ENCODE measurements at regions of chr1 and their contacts with region 1.

Region 1: GRCh38 chr1:75672528-75673393 is 51.7 kb upstream of the ACADM start:
- DNase-seq: peak; percentile 19 to 38
- H3K4me3 ChIP-seq: no peak overlapping the region
- H3K4me3 Mint-ChIP-seq: no peak overlapping the region
- H3K27ac Mint-ChIP-seq: peak overlapping the region; percentile 76
- H3K4me1 ChIP-seq: peaks cover 20% of the 10 kb centered on the region
- H3K4me1 Mint-ChIP-seq: peaks cover 7% of the 10 kb centered on the region
- H3K27me3 ChIP-seq: no peaks in the 10 kb centered on the region
- H3K27me3 Mint-ChIP-seq: no peaks in the 10 kb centered on the region
- CTCF ChIP-seq: no peak

Region 2: DNA sequence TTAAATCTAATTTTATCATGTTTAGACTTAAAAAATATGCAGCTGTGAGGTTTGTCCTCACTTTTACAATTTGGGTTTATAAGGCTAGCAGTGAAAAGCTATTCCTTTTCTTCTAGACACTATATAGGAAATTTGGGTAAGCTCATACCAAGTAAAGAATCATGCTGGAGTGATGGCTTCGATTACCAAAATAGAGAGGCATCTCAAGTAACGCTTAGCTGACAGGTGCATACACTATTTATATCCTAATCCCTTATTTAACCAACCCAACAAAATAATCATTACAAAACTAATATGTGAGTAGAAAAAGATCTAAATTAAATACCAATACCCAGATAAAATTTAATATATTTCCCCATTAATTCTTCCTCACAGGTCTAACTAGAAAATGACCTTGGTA is 345.4 kb before region 1 on chr1:
- CTCF ChIA-PET with region 1: no interaction called
- POLR2A ChIA-PET with region 1: no interaction called
- intact Hi-C with region 1: no loop called
- DNase-seq: no peak
- H3K4me3 ChIP-seq: no peak overlapping the region
- H3K4me3 Mint-ChIP-seq: no peak overlapping the region
- H3K27ac Mint-ChIP-seq: no peak overlapping the region
- H3K4me1 ChIP-seq: peaks cover 28% of the 10 kb centered on the region
- H3K4me1 Mint-ChIP-seq: no peaks in the 10 kb centered on the region
- H3K27me3 ChIP-seq: no peaks in the 10 kb centered on the region
- H3K27me3 Mint-ChIP-seq: no peaks in the 10 kb centered on the region
- CTCF ChIP-seq: no peak

Region 3: GRCh38 chr1:75724472-75725022 is 51.8 kb after region 1 on chr1 and contains the start of gene ACADM:
- CTCF ChIA-PET with region 1: no interaction called
- POLR2A ChIA-PET with region 1: no interaction called
- intact Hi-C with region 1: loop called (anchors 5 kb)
- DNase-seq: peak; percentile 81 to 82
- H3K4me3 ChIP-seq: peak within 1 kb of the TSS; percentile 66
- H3K4me3 Mint-ChIP-seq: peak within 1 kb of the TSS; percentile 90
- H3K27ac Mint-ChIP-seq: peak within 1 kb of the TSS; percentile 76
- H3K4me1 ChIP-seq: peaks cover 30% of the 10 kb centered on the region
- H3K4me1 Mint-ChIP-seq: no peaks in the 10 kb centered on the region
- H3K27me3 ChIP-seq: no peaks in the 10 kb centered on the region
- H3K27me3 Mint-ChIP-seq: no peaks in the 10 kb centered on the region
- CTCF ChIP-seq: no peak
- total RNA-seq, gene ACADM: 39.7 and 44.4 TPM in 2 replicates

Measured in Caco-2 (cell line).